Ascending aorta (tissue), 2 donors: ENCODE measurements at regions of chr7 and their contacts with region 1.

Region 1: GRCh38 chr7:78020136-78020873 is 221.7 kb downstream of the PHTF2 start:
- DNase-seq: peak in 1 of 2 donors; percentile 76
- H3K4me3 ChIP-seq: peak overlapping the region; percentile 63 to 78
- H3K27ac ChIP-seq: peak overlapping the region; percentile 100
- H3K4me1 ChIP-seq: peaks cover 4 to 10% of the 10 kb centered on the region in 2 donors
- H3K27me3 ChIP-seq: no peaks in the 10 kb centered on the region
- CTCF ChIP-seq: peak; percentile 56 to 70 (median 63)

Region 2: GRCh38 chr7:77798394-77799077 is 221.8 kb before region 1 on chr7 and contains the starts of genes PHTF2 and TMEM60:
- intact Hi-C with region 1: loop called (anchors 5 kb)
- DNase-seq: peak; percentile 97 to 99
- H3K4me3 ChIP-seq: peak within 1 kb of the TSS; percentile 88 to 90
- H3K27ac ChIP-seq: peak within 1 kb of the TSS; percentile 91 to 97
- H3K4me1 ChIP-seq: peaks cover 4 to 8% of the 10 kb centered on the region in 2 donors
- H3K27me3 ChIP-seq: no peaks in the 10 kb centered on the region
- CTCF ChIP-seq: peak; percentile 39 to 54 (median 48)
- total RNA-seq, gene PHTF2: 10.2 TPM
- total RNA-seq, gene TMEM60: not detected

Region 3: GRCh38 chr7:77866786-77867536 is 153.3 kb before region 1 on chr7:
- intact Hi-C with region 1: no loop called
- DNase-seq: no peak
- H3K4me3 ChIP-seq: no peak overlapping the region
- H3K27ac ChIP-seq: no peak overlapping the region
- H3K4me1 ChIP-seq: peaks cover 0 to 4% of the 10 kb centered on the region in 2 donors
- H3K27me3 ChIP-seq: no peaks in the 10 kb centered on the region
- CTCF ChIP-seq: no peak

Region 4: DNA sequence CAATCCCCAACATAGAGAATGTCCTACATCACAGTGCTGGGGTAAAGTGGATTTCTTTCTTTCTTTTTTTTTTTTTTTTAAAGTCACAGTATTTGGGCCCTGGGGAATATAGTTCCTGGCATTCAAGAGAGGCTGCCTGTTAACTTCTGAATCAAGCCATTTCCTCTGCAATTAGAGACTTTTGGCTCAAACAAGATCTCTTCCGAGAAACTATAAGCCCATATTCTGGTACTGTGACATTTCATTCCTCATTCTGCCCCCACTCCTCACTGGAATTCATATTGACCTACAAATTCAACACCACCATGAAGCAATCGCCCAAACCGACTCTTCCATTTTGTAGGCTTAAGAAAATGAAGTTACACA is 34.3 kb before region 1 on chr7:
- intact Hi-C with region 1: loop called (anchors 2 kb)
- DNase-seq: no peak
- H3K4me3 ChIP-seq: peak overlapping the region; percentile 1 to 45
- H3K27ac ChIP-seq: peak overlapping the region; percentile 76 to 86
- H3K4me1 ChIP-seq: peaks cover 0 to 4% of the 10 kb centered on the region in 2 donors
- H3K27me3 ChIP-seq: no peaks in the 10 kb centered on the region
- CTCF ChIP-seq: no peak

Region 5: GRCh38 chr7:78095549-78095948 is 75.2 kb after region 1 on chr7:
- intact Hi-C with region 1: no loop called
- DNase-seq: no peak
- H3K4me3 ChIP-seq: no peak overlapping the region
- H3K27ac ChIP-seq: no peak overlapping the region
- H3K4me1 ChIP-seq: no peaks in the 10 kb centered on the region
- H3K27me3 ChIP-seq: no peaks in the 10 kb centered on the region
- CTCF ChIP-seq: no peak

Region 6: GRCh38 chr7:78702770-78703169 is 682.5 kb after region 1 on chr7:
- intact Hi-C with region 1: loop called (anchors 5 kb)
- DNase-seq: no peak
- H3K4me3 ChIP-seq: no peak overlapping the region
- H3K27ac ChIP-seq: peak overlapping the region in 1 of 2 donors; percentile 62
- H3K4me1 ChIP-seq: peaks cover 3 to 6% of the 10 kb centered on the region in 2 donors
- H3K27me3 ChIP-seq: no peaks in the 10 kb centered on the region
- CTCF ChIP-seq: no peak

Region 7: DNA sequence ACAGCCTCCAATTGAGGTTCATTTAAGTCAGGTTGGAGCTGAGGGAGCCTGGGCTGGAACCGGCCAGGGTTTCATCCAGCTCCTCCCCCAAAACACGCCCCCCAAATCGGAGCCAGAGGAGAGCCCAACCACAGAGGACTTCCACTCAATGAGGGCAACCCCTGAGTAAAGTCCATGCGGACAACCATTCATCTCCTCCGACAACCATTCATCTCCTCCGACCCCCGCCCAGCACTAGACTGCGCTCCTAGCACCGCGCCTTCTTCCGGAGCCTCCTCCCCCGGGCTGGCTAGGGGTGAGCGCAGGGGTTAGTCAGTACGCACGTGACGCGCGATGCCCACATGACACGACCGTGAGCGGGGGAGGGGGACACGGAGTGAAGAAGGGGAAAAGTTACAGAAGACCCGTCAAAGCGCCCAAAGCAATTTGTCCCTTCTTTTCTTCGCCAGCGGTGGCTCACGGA is 1431.8 kb after region 1 on chr7:
- intact Hi-C with region 1: loop called (anchors 2 kb)
- DNase-seq: peak; percentile 64 to 93
- H3K4me3 ChIP-seq: peak overlapping the region; percentile 81 to 90
- H3K27ac ChIP-seq: peak overlapping the region; percentile 96 to 98
- H3K4me1 ChIP-seq: peaks cover 4 to 10% of the 10 kb centered on the region in 2 donors
- H3K27me3 ChIP-seq: no peaks in the 10 kb centered on the region
- CTCF ChIP-seq: no peak